ENCODE measurements at regions of chr10 and their contacts with region 1.

Region 1: GRCh38 chr10:68560186-68560942 is at the start of gene TET1:
- DNase-seq: peak; percentile 61 to 64
- ATAC-seq: peak; percentile 80 to 87
- H3K4me3 ChIP-seq: peak within 1 kb of the TSS; percentile 89
- H3K27ac ChIP-seq: peak within 1 kb of the TSS; percentile 83 to 90
- H3K4me1 ChIP-seq: peaks cover 5% of the 10 kb centered on the region; the same call in 1 of the 3 replicates
- CTCF ChIP-seq: no peak
- EP300 ChIP-seq: no peak
- POLR2A ChIP-seq: peak; percentile 46
- RAD21 ChIP-seq: no peak; a peak in 1 of 5 replicates
- polyA plus RNA-seq, gene TET1: 1.7 and 1.8 TPM in 2 replicates

Region 2: DNA sequence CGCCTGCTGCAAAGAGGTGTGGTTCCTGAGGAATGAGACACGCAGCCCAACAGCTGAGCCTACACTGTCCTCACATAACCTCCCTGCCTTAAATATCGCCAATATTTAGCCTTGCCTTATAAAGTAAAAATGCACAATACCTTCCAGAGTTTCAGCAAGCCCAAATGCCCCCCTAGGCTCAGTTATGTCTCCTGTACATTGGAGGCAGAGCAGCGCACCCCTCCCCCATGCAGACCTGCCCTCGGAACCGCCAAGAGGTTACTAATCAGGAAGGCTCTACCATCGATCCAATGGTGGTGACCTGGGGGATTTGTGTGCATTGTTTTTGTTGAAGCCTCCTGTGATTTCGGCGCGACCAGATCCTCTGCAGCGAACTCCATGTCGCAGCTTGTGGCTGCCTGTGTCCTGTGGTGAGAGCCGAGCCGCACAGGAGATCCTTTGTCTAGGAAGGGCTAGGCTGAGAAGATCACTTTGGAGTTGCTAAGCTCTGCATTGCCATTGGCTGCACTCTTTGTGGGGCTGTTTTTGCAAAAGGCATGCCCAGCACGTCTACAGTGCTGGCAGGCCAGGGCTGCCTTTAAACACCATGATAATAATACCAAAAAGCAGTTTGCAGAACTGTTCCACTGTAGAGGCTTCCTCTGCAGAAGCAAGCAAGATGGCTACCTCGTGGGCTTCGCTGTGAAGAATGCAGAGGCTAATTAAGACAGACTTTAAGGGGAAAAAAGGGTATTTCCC is 39.8 kb after region 1 on chr10:
- CTCF ChIA-PET with region 1: interaction called, 3 read pairs
- POLR2A ChIA-PET with region 1: interaction called, 11 read pairs
- DNase-seq: peak; percentile 68 to 74
- ATAC-seq: peak; percentile 94 to 97
- H3K4me3 ChIP-seq: peak overlapping the region; percentile 46
- H3K27ac ChIP-seq: peak overlapping the region; percentile 89
- H3K4me1 ChIP-seq: peaks cover 28% of the 10 kb centered on the region
- CTCF ChIP-seq: no peak
- EP300 ChIP-seq: no peak
- POLR2A ChIP-seq: peak; percentile 52
- RAD21 ChIP-seq: 0 out of 5 replicates have a peak, but pooled peaks of 1 of the 2 experiments have one; percentile 2

Measured in A549 (cell line).